GM12878 (cell line): ENCODE measurements at regions of chr13 and their contacts with region 1.

Region 1: GRCh38 chr13:59261928-59262488 is 901.7 kb downstream of the DIAPH3 start:
- DNase-seq: no peak
- ATAC-seq: peak; percentile 41; the same call in 2 of the 3 replicates
- H3K4me3 ChIP-seq: no peak overlapping the region
- H3K27ac ChIP-seq: no peak overlapping the region
- H3K4me1 ChIP-seq: no peaks in the 10 kb centered on the region
- H3K27me3 ChIP-seq: no peaks in the 10 kb centered on the region
- CTCF ChIP-seq: peak; percentile 17 to 43 (median 39); a peak in 4 of 6 replicates
- EP300 ChIP-seq: no peak
- POLR2A ChIP-seq: no peak
- RAD21 ChIP-seq: peak; percentile 18; the same call in 1 of the 2 replicates

Region 2: GRCh38 chr13:57629821-57630235 is 1632.2 kb before region 1 on chr13:
- CTCF ChIA-PET with region 1: interaction called, 22 read pairs
- POLR2A ChIA-PET with region 1: no interaction called
- RAD21 ChIA-PET with region 1: interaction called, 9 read pairs
- SMC1A ChIA-PET with region 1: interaction called, 10 read pairs
- in situ Hi-C with region 1: no loop called
- intact Hi-C with region 1: loop called (anchors 2 kb)
- DNase-seq: no peak
- ATAC-seq: peak; percentile 60
- H3K4me3 ChIP-seq: no peak overlapping the region
- H3K27ac ChIP-seq: no peak overlapping the region
- H3K4me1 ChIP-seq: no peaks in the 10 kb centered on the region
- H3K27me3 ChIP-seq: peaks cover 0 to 8% of the 10 kb centered on the region in 2 experiments; a peak in 2 of 4 replicates
- CTCF ChIP-seq: no peak
- EP300 ChIP-seq: no peak
- POLR2A ChIP-seq: no peak
- RAD21 ChIP-seq: no peak